Panc1 (cell line): ENCODE measurements at regions of chr1 and their contacts with region 1.

Region 1: GRCh38 chr1:56844545-56845136 is 10.0 kb upstream of the C8A start:
- DNase-seq: no peak
- ATAC-seq: no peak
- H3K4me3 ChIP-seq: no peak overlapping the region
- H3K27ac ChIP-seq: no peak overlapping the region
- H3K4me1 ChIP-seq: no peaks in the 10 kb centered on the region
- H3K27me3 ChIP-seq: 0 out of 2 replicates have a peak, but pooled peaks cover 2% of the 10 kb centered on the region
- CTCF ChIP-seq: no peak

Region 2: DNA sequence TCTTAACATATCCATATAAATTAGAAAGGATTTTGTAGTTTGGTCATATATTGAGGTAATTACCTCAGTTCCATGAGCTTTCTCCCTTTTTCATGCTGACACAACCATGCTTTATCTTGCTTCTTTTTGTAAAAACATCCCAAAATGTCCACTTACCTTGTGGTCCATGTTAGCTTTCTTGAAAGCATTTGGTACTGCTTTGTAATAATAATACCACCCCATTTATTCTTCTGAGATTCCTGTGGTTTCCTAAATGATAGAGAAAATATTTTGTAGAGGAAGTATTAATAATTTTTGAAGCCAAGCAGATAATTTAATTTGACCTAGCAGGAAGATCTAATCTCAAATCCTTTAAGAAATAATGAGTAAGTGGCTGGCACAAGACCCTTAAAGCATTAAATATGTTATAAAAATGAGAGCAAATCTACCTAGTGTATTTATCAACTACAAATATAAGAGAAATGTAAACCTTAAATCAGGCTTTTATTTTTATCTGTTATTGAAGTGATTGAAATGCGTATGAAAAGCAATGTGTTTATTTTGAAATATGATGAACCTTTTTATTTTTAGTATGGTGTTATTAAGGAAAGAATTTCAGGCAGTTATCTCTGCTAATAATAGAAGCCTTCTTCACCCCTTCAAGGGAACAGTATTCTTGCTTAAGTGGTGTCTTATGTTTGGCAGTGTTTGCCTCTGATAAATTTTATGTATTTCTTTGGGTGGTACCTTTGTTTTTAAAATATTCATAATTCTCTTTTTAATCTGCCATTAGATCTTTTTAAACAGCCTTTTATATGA is 190.3 kb before region 1 on chr1:
- CTCF ChIA-PET with region 1: no interaction called
- POLR2A ChIA-PET with region 1: interaction called, 16 read pairs
- in situ Hi-C with region 1: no loop called
- intact Hi-C with region 1: no loop called
- DNase-seq: no peak
- ATAC-seq: no peak
- H3K4me3 ChIP-seq: no peak overlapping the region
- H3K27ac ChIP-seq: no peak overlapping the region
- H3K4me1 ChIP-seq: peaks cover 3% of the 10 kb centered on the region; the same call in 1 of the 2 replicates
- H3K27me3 ChIP-seq: no peaks in the 10 kb centered on the region
- CTCF ChIP-seq: no peak

Region 3: GRCh38 chr1:56688506-56689026 is 156.1 kb before region 1 on chr1:
- CTCF ChIA-PET with region 1: no interaction called
- POLR2A ChIA-PET with region 1: no interaction called
- in situ Hi-C with region 1: no loop called
- intact Hi-C with region 1: no loop called
- DNase-seq: peak; percentile 98
- ATAC-seq: peak; percentile 100
- H3K4me3 ChIP-seq: peak overlapping the region in 1 of 2 experiments; percentile 21; a peak in 2 of 4 replicates
- H3K27ac ChIP-seq: peak overlapping the region; percentile 94
- H3K4me1 ChIP-seq: peaks cover 18% of the 10 kb centered on the region
- H3K27me3 ChIP-seq: no peaks in the 10 kb centered on the region
- CTCF ChIP-seq: no peak

Region 4: DNA sequence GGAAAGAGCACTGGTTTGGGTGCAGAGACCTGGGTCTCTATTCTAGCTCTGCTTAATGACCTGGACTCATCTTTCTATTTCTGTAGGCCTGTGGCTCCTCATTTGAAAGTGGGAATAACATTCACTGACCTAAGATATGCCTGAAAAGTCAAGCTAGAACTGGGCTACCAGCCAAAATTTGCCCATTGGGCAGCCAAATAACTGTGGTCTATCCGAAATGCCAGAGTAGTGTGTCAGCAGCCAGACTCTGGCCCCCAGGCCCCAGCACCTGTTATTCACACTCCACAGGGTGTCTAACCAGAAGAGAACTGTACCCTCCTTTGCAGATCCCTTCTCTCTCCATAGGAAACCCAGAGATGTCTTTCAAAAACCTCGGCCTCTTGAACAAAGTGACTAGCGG is 566.6 kb after region 1 on chr1:
- CTCF ChIA-PET with region 1: no interaction called
- POLR2A ChIA-PET with region 1: no interaction called
- in situ Hi-C with region 1: no loop called
- intact Hi-C with region 1: no loop called
- DNase-seq: no peak
- ATAC-seq: no peak
- H3K4me3 ChIP-seq: no peak overlapping the region
- H3K27ac ChIP-seq: no peak overlapping the region
- H3K4me1 ChIP-seq: no peaks in the 10 kb centered on the region
- H3K27me3 ChIP-seq: peaks cover 3% of the 10 kb centered on the region
- CTCF ChIP-seq: no peak